Caco-2 (cell line): ENCODE measurements at regions of chr16 and their contacts with region 1.

Region 1: DNA sequence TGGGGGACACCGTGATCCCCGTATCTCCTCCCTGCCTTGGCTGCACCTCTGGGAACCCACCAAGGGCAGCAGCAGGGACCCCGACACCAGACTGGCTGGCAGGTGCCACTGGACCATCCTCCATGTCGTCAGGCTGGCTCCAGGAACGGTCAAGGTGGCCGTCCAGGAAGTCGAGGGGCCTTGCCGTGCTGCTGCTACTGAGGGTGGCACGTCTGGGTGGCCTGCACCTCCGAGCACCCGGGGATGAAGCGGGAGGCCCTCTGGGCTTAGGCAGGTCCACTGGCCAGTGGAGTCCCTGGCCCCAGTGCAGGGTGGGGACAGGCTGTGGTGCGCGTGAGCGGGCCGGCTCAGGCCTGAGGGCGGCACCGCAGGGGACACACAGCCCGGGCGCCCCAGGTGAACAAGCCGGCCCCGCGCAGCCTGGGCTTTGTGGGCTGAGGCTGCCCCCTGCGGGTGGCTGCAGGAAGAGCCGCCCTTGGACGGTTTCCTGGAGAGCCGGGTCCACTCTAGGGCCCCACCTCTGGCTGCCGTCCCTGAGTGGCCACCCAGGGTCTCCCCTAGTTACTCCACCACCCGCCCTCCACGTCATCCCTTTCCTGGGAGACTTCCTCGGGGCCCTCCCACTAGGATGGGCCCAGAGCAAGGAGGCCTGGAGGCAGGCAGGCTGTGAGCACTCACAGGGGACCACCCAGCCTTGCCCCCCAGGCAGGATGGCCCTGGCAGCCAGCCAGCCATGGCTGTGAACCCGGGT is 42.8 kb upstream of the ZC3H18 start:
- DNase-seq: peak; percentile 50 to 87
- H3K4me3 ChIP-seq: no peak overlapping the region
- H3K4me3 Mint-ChIP-seq: no peak overlapping the region
- H3K27ac Mint-ChIP-seq: no peak overlapping the region
- H3K4me1 ChIP-seq: peaks cover 22% of the 10 kb centered on the region
- H3K4me1 Mint-ChIP-seq: no peaks in the 10 kb centered on the region
- H3K27me3 ChIP-seq: no peaks in the 10 kb centered on the region
- H3K27me3 Mint-ChIP-seq: no peaks in the 10 kb centered on the region
- CTCF ChIP-seq: peak; percentile 92 to 96

Region 2: DNA sequence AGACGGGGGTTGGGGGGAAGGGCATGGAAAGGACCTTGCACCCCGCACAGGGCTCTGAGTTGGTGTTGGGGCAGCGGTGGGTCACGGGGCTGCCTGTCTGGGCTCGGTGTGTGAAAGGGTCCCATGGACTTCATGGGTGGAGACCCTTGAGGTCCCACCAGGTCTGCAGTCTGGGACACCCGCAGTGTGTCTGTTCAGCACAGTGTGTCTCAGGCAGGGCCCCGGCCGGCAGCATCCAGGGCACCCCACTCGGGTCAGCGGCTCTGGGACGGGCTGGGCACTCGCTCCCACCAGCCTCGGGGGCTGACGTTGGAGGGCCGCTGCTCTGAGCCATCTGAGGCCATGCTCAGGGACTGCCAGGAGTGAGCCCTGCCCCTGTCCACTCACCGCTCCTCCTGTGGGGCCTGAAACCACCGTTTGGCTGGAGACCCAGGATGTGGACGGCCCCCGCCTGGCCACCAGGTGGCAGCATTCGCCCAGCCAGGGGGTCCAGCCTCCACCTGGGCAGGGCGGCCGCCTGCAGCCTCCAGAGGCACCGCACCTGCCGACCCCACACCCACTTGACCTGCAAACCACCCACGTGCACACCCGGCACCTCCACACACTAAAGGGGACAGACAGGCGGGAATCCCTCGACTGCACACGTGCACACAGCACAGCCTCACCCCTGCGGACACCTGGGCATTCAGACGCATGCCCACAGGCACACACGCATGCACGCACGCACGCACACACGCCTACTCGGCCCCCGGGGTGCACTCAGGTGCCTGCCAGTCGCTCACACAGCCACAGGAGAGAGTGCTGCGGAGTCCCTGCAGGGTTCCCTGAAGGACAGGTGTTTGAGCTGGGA is 84.4 kb before region 1 on chr16:
- CTCF ChIA-PET with region 1: no interaction called
- POLR2A ChIA-PET with region 1: no interaction called
- intact Hi-C with region 1: loop called (anchors 1 kb)
- DNase-seq: peak; percentile 83 to 95
- H3K4me3 ChIP-seq: no peak overlapping the region
- H3K4me3 Mint-ChIP-seq: no peak overlapping the region
- H3K27ac Mint-ChIP-seq: no peak overlapping the region
- H3K4me1 ChIP-seq: peaks cover 9% of the 10 kb centered on the region
- H3K4me1 Mint-ChIP-seq: no peaks in the 10 kb centered on the region
- H3K27me3 ChIP-seq: no peaks in the 10 kb centered on the region
- H3K27me3 Mint-ChIP-seq: no peaks in the 10 kb centered on the region
- CTCF ChIP-seq: peak; percentile 98 to 99

Region 3: DNA sequence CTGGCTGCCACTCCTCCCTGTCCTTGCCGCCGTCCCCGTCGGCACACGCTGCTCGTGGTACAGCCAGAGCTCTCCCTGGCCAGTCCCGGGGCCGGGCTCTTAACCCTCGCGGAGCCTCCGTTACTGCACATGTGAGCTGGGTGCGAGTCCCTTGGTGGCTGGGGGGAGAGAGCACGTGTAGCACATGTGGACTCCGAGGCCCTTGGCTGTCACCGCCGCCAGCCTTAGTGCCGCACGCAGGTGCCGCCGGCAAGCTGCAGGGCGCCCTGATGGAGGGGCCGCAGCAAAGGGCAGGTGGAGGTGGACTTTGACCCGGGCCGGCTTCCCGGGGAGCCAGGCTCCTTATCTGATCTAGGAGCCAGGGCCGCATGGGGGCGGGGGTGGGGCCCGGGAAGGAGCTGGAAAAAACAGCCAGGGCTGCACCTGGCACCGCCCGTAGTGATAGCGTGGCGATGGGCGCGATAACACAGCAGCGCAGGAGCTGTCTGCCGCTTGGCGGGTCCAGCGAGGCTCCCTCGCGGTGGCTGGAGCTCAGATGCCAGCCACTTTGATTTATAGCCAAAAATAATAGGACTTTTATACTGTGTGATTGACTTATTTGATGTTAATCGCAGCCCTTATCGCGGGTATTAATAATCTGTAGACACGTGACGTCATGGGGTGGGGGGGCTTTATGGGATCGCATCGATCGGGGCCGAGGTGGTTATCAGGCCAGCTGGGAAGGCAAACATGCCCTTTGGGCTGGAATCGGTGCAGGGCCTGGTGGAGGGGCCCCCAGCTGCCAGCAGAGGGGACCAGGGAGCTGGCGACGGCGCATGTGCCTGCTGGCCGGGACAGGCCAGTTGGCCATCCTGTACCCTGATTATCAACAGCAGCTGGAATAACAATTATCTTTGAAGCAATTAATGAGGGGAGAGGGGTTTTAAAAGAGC is 39.2 kb before region 1 on chr16:
- CTCF ChIA-PET with region 1: interaction called, 3 read pairs
- POLR2A ChIA-PET with region 1: no interaction called
- intact Hi-C with region 1: loop called (anchors 1 kb)
- DNase-seq: peak; percentile 98 to 99
- H3K4me3 ChIP-seq: peak overlapping the region; percentile 21
- H3K4me3 Mint-ChIP-seq: peak overlapping the region; percentile 84
- H3K27ac Mint-ChIP-seq: peak overlapping the region; percentile 99
- H3K4me1 ChIP-seq: peaks cover 70% of the 10 kb centered on the region
- H3K4me1 Mint-ChIP-seq: peaks cover 32% of the 10 kb centered on the region
- H3K27me3 ChIP-seq: no peaks in the 10 kb centered on the region
- H3K27me3 Mint-ChIP-seq: no peaks in the 10 kb centered on the region
- CTCF ChIP-seq: peak; percentile 34 to 91

Region 4: GRCh38 chr16:88561485-88562369 is 34.4 kb after region 1 on chr16:
- CTCF ChIA-PET with region 1: interaction called, 3 read pairs
- POLR2A ChIA-PET with region 1: no interaction called
- intact Hi-C with region 1: loop called (anchors 5 kb)
- DNase-seq: peak in 1 of 2 experiments; percentile 75
- H3K4me3 ChIP-seq: no peak overlapping the region
- H3K4me3 Mint-ChIP-seq: no peak overlapping the region
- H3K27ac Mint-ChIP-seq: no peak overlapping the region
- H3K4me1 ChIP-seq: peaks cover 9% of the 10 kb centered on the region
- H3K4me1 Mint-ChIP-seq: peaks cover 6% of the 10 kb centered on the region
- H3K27me3 ChIP-seq: no peaks in the 10 kb centered on the region
- H3K27me3 Mint-ChIP-seq: peaks cover 2% of the 10 kb centered on the region
- CTCF ChIP-seq: peak; percentile 80 to 88